ENCODE measurements at regions of chr2 and their contacts with region 1.

Region 1: GRCh38 chr2:240983361-240983995 is 14.9 kb upstream of the SNED1 start:
- DNase-seq: peak; percentile 45
- ATAC-seq: peak; percentile 86
- H3K4me3 Mint-ChIP-seq: no peak overlapping the region
- H3K27ac Mint-ChIP-seq: no peak overlapping the region
- H3K4me1 Mint-ChIP-seq: peaks cover 3% of the 10 kb centered on the region
- H3K27me3 Mint-ChIP-seq: peaks cover 14% of the 10 kb centered on the region
- CTCF ChIP-seq: no peak

Region 2: GRCh38 chr2:240913810-240914644 is 69.5 kb before region 1 on chr2:
- CTCF ChIA-PET with region 1: no interaction called
- POLR2A ChIA-PET with region 1: no interaction called
- intact Hi-C with region 1: loop called (anchors 2 kb)
- DNase-seq: peak; percentile 66
- ATAC-seq: peak; percentile 71
- H3K4me3 Mint-ChIP-seq: no peak overlapping the region
- H3K27ac Mint-ChIP-seq: no peak overlapping the region
- H3K4me1 Mint-ChIP-seq: peaks cover 11% of the 10 kb centered on the region
- H3K27me3 Mint-ChIP-seq: peaks cover 24% of the 10 kb centered on the region
- CTCF ChIP-seq: peak; percentile 15

Region 3: DNA sequence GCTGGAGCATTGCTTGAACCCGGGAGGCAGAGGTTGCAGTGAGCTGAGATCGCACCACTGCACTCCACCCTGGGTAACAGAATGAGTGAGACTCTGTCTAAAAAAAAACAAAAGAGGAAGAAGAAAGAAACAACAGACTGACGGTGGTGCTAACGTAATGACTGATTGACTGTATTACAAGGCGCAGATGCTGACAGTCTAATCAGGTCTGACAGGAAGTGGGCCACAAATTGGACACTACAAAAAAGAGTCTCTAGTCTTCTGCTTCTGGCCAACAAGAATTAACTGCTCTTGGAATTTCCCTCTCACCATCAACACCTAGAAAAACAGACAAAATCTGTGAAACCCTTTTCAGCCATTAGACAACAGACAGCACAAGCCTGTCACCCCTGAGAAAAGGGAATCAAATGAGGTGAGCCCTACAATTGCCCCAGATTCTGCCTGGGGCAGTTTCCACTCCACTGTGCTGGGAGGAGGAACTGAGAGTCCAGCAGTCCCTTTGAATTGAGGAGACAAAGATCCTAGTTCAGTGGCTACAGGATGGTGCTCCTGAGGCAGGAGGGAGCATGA is 58.2 kb after region 1 on chr2:
- CTCF ChIA-PET with region 1: no interaction called
- POLR2A ChIA-PET with region 1: interaction called, 3 read pairs
- intact Hi-C with region 1: loop called (anchors 5 kb)
- DNase-seq: no peak
- ATAC-seq: peak; percentile 75
- H3K4me3 Mint-ChIP-seq: peak overlapping the region; percentile 74
- H3K27ac Mint-ChIP-seq: peak overlapping the region; percentile 96
- H3K4me1 Mint-ChIP-seq: peaks cover 70% of the 10 kb centered on the region
- H3K27me3 Mint-ChIP-seq: no peaks in the 10 kb centered on the region
- CTCF ChIP-seq: no peak

Region 4: GRCh38 chr2:241081643-241082340 is 98.3 kb after region 1 on chr2:
- CTCF ChIA-PET with region 1: interaction called, 5 read pairs
- POLR2A ChIA-PET with region 1: no interaction called
- intact Hi-C with region 1: loop called (anchors 2 kb)
- DNase-seq: no peak
- ATAC-seq: no peak
- H3K4me3 Mint-ChIP-seq: no peak overlapping the region
- H3K27ac Mint-ChIP-seq: no peak overlapping the region
- H3K4me1 Mint-ChIP-seq: peaks cover 12% of the 10 kb centered on the region
- H3K27me3 Mint-ChIP-seq: no peaks in the 10 kb centered on the region
- CTCF ChIP-seq: no peak

Region 5: GRCh38 chr2:241217320-241218031 is 234.0 kb after region 1 on chr2:
- CTCF ChIA-PET with region 1: no interaction called
- POLR2A ChIA-PET with region 1: no interaction called
- intact Hi-C with region 1: loop called (anchors 10 kb)
- DNase-seq: peak; percentile 53
- ATAC-seq: peak; percentile 73
- H3K4me3 Mint-ChIP-seq: peak overlapping the region; percentile 83
- H3K27ac Mint-ChIP-seq: peak overlapping the region; percentile 73
- H3K4me1 Mint-ChIP-seq: peaks cover 10% of the 10 kb centered on the region
- H3K27me3 Mint-ChIP-seq: no peaks in the 10 kb centered on the region
- CTCF ChIP-seq: no peak

Region 6: DNA sequence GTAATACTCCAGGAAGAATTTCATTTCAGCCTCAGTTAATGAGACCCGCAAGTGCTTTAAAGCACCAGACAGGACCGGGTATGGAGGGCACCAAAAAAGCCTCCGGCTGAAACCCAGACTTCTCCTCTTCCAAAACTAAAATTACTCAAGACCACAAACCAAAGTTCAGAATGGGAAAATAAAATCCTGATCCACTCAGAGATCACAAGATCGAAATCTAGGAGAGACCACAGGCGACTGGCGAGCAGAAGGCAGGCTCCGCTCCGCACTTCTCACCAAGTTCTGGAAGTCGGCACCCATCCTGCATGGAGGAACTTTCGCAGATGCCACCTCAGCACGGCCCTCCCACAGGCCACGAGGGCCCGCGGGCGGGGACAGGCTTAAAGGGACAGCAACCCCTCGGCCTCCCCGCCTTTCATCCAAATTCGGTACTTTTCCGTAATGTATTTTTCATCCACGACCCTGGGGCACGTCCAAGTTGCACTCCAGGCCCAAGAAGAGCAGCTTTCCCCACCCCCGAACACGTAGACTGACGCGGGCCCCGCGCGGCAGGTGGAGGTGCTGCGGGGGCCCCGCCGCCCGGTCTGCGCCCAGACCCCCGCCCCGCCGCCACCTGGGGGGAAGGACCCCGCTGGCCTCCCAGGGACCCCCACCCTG is 288.3 kb after region 1 on chr2:
- CTCF ChIA-PET with region 1: no interaction called
- POLR2A ChIA-PET with region 1: no interaction called
- intact Hi-C with region 1: no loop called
- DNase-seq: peak; percentile 52
- ATAC-seq: peak; percentile 70
- H3K4me3 Mint-ChIP-seq: peak overlapping the region; percentile 94
- H3K27ac Mint-ChIP-seq: peak overlapping the region; percentile 89
- H3K4me1 Mint-ChIP-seq: peaks cover 36% of the 10 kb centered on the region
- H3K27me3 Mint-ChIP-seq: no peaks in the 10 kb centered on the region
- CTCF ChIP-seq: no peak